HCT116 (cell line): ENCODE measurements at regions of chr9 and their contacts with region 1.

Region 1: GRCh38 chr9:137302176-137302994 is at the start of gene NRARP:
- DNase-seq: peak; percentile 60
- ATAC-seq: peak; percentile 76
- H3K4me3 ChIP-seq: peak within 1 kb of the TSS; percentile 51 to 69
- H3K27ac ChIP-seq: peak within 1 kb of the TSS; percentile 78
- H3K4me1 ChIP-seq: peaks cover 18 to 62% of the 10 kb centered on the region in 2 experiments
- H3K27me3 ChIP-seq: no peaks in the 10 kb centered on the region
- CTCF ChIP-seq: peak in 2 of 3 experiments; percentile 47 to 57; a peak in 4 of 6 replicates
- POLR2A ChIP-seq: peak; percentile 94
- RAD21 ChIP-seq: no peak
- total RNA-seq, gene NRARP: 22.2 TPM

Region 2: DNA sequence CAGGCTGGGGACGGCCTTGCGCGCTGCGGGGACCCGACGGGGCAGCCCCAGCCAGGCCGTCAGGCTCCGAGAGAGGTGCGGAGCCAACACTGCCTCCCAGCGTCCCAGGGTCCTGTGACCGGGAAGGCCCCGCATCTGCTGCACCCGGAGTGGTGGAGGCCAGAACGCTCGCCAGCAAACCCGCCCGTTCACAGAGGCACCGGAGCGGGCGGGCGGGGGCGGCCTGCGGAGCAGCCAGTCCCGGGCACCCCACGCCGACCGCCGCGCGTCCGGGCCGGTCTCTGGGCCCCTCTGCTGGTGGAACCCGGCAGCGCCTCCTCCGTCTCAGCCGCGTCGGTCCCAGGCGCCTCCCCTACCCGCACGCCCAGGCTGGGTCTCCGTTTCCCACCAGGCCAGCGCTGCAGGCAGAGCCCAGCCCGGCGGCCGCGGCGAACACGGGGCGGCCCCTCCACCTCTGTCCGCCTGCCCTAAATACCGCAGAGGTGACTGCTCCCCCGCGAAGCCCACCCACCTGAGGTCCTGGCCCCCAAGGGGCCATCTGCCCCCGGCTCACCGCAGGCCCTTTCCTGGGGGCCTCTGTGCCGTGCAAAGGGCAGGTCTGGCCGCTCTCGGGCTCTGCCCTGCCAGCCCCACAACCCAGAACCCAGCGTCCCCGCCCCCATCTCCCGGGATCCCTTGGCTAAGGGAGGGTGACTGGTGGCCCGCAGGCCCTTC is 104.6 kb after region 1 on chr9:
- CTCF ChIA-PET with region 1: interaction called, 5 read pairs
- POLR2A ChIA-PET with region 1: interaction called, 3 read pairs
- RAD21 ChIA-PET with region 1: interaction called in 1 of 2 experiments, 3 read pairs
- intact Hi-C with region 1: loop called (anchors 2 kb)
- DNase-seq: no peak
- ATAC-seq: peak; percentile 79
- H3K4me3 ChIP-seq: peak overlapping the region; percentile 26 to 51
- H3K27ac ChIP-seq: no peak overlapping the region; the same call in 1 of the 2 replicates
- H3K4me1 ChIP-seq: peaks cover 26 to 50% of the 10 kb centered on the region in 2 experiments
- H3K27me3 ChIP-seq: no peaks in the 10 kb centered on the region
- CTCF ChIP-seq: peak in 2 of 3 experiments; percentile 58 to 81; a peak in 4 of 6 replicates
- POLR2A ChIP-seq: no peak
- RAD21 ChIP-seq: no peak

Region 3: DNA sequence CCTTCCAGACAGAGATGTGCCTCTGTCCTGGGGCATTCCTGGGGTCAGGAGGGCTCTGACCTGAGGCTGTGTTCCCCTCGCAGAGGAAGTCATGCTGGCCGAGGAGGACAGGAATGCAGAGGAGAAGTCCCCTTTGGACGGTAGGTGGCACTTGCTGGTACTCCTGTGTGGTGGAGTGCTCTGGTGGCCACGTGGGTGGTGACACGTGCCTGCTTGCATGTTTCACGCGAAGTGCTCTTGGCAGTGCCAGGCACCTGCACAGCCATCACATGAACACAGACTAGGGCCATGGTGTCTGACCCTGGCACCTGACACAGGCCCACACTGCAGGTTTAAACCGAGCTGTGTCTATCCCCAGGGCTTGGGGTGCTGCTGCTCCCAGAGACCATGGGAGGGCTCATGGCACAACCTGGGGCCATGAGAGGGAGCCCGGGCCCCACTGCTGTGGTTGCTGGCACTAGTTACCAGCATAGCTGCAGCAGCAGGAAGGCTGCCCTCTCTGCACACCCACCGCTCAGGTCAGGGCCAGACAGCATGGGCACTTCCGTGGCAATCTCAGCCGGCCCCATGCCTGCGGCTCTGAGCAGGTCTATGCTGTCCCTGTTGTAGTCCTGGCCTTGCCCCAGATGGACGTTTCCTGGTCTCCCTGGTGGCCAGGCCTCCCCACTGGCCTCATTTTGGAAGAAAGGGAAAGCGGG is 654.5 kb after region 1 on chr9:
- CTCF ChIA-PET with region 1: no interaction called
- POLR2A ChIA-PET with region 1: no interaction called
- RAD21 ChIA-PET with region 1: no interaction called
- intact Hi-C with region 1: no loop called
- DNase-seq: no peak
- ATAC-seq: peak; percentile 64
- H3K4me3 ChIP-seq: no peak overlapping the region
- H3K27ac ChIP-seq: no peak overlapping the region
- H3K4me1 ChIP-seq: no peaks in the 10 kb centered on the region
- H3K27me3 ChIP-seq: no peaks in the 10 kb centered on the region
- CTCF ChIP-seq: 0 out of 6 replicates have a peak, but pooled peaks of 1 of the 3 experiments have one; percentile 13
- POLR2A ChIP-seq: no peak
- RAD21 ChIP-seq: no peak